ENCODE measurements at regions of chrX and their contacts with region 1.

Region 1: GRCh38 chrX:36804066-36804465 is 204.1 kb upstream of the FAM47C start:
- DNase-seq: no peak
- H3K4me3 ChIP-seq: no peak overlapping the region
- H3K27ac ChIP-seq: no peak overlapping the region
- H3K4me1 ChIP-seq: no peaks in the 10 kb centered on the region
- H3K27me3 ChIP-seq: no peaks in the 10 kb centered on the region
- CTCF ChIP-seq: no peak
- POLR2A ChIP-seq: no peak

Region 2: GRCh38 chrX:36961590-36961989 is 157.5 kb after region 1 on chrX:
- intact Hi-C with region 1: loop called (anchors 5 kb)
- DNase-seq: no peak
- H3K4me3 ChIP-seq: no peak overlapping the region
- H3K27ac ChIP-seq: no peak overlapping the region
- H3K4me1 ChIP-seq: no peaks in the 10 kb centered on the region
- H3K27me3 ChIP-seq: peaks cover 0 to 29% of the 10 kb centered on the region in 2 donors
- CTCF ChIP-seq: no peak
- POLR2A ChIP-seq: no peak